Heart left ventricle (tissue), 16 donors: ENCODE measurements at regions of chr11 and their contacts with region 1.

Region 1: DNA sequence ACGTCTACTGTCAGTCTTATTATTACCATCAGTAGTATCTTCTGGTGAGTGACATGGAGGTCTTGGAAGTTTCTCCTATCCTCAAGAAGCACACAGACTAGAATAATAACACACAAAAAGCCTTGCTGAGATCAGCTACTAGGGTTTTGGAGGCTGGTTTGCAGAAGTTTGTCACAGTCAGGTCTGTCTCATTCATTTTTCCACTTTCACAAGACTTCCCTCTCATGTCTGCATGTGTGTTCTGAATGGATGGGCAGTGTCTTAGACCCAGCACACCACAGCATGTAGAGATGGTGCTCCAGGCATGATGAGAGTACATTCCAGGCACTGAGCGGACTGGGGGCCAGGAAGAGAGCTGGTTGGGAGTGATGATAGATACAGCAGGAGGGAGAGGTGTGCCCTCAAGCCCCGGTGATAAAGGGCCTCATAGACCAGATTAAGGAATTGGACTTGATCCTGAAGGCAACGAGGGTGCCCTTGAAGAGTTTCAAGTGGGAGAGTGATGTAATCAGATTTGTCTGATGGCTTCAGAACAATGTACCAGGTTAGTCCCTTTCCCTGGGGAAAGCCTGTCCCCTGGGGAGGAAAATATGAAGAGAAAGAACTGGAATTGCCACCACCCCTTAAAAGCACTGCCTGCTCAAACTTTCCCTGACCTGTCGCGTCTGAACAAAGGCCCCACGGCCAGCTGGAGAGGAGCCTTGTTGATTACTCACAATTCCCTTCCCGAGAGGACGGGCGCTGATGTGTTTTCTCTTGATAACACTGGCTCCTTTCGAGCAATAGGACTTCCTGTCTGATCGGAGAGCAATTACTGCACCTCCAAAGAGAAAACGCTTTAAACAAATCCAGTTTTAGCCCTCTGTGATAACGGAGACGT is 45.1 kb upstream of the LMO2 start:
- DNase-seq: peak; percentile 67 to 83 (median 75)
- ATAC-seq: peak; percentile 48 to 89 (median 83)
- H3K4me3 ChIP-seq: no peak overlapping the region
- H3K27ac ChIP-seq: peak overlapping the region in 8 of 12 donors; percentile 27 to 61 (median 54)
- H3K4me1 ChIP-seq: peaks cover 0 to 54% (median 25%) of the 10 kb centered on the region in 12 donors
- H3K27me3 ChIP-seq: no peaks in the 10 kb centered on the region
- CTCF ChIP-seq: no peak
- POLR2A ChIP-seq: no peak

Region 2: DNA sequence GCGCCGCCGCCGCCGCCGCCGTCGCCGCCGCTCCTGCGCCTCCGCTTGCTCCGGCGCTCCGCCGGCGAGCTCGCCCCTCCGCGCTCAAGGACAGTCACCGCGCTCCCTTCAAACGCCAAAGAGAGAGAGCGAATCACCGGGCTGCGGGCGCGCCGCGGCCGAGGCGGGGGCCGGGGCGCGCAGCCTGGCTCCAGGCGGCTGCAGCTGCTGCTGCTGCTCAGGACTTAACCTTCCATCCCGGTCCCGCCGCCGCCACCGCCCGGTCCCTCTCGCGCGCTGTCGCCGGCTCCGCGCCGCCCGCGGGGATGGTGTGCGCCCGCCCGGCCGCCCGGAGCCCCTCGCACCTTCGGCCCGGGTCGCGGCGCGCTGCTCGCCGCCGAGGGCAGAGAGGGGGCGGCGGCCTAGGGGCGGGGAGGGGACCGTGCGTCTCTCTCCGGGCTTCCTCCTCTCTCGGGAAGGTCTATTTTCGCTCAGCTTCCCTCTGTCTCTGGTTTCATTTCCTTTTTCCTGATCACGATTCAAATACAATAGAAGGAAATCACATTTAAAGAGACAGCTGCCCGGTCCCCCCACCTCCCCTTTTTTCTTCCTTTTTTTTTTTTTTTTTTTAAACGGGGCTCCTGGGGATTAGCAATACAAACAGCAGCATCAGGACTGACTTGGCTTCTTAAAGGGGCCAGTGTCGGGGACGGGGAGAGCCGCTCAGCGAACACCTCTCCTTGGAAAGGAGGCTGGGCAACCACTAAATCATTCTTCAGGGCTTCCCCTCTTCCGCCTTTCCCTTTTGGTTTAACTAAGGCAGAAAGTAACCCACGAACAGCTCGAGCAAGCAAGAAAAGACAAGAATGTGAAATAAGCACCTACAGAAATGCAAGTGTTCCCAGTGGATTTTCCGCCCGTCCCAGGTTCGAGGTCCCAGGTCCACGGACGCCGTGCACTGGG is 67.2 kb before region 1 on chr11:
- intact Hi-C with region 1: loop called in 5 of 10 experiments (anchors 2 to 10 kb)
- DNase-seq: peak; percentile 47 to 76 (median 69)
- ATAC-seq: peak; percentile 73 to 91 (median 80)
- H3K4me3 ChIP-seq: peak overlapping the region; percentile 35 to 89 (median 69)
- H3K27ac ChIP-seq: peak overlapping the region; percentile 69 to 93 (median 84)
- H3K4me1 ChIP-seq: peaks cover 0 to 54% (median 17%) of the 10 kb centered on the region in 12 donors
- H3K27me3 ChIP-seq: peaks cover 0 to 17% (median 0%) of the 10 kb centered on the region in 9 donors
- CTCF ChIP-seq: no peak
- POLR2A ChIP-seq: peak in 1 of 2 donors; percentile 16

Region 3: GRCh38 chr11:33899383-33900037 is 37.5 kb before region 1 on chr11:
- intact Hi-C with region 1: loop called in 1 of 10 experiments (anchors 2 kb)
- DNase-seq: peak; percentile 75 to 87 (median 85)
- ATAC-seq: peak; percentile 87 to 99 (median 98)
- H3K4me3 ChIP-seq: no peak overlapping the region
- H3K27ac ChIP-seq: peak overlapping the region in 2 of 12 donors; percentile 11 to 18
- H3K4me1 ChIP-seq: peaks cover 3 to 48% (median 11%) of the 10 kb centered on the region in 12 donors
- H3K27me3 ChIP-seq: no peaks in the 10 kb centered on the region
- CTCF ChIP-seq: no peak
- POLR2A ChIP-seq: no peak